Cardiac septum (tissue), 1 donor: ENCODE measurements at regions of chr1 and their contacts with region 1.

Region 1: GRCh38 chr1:107430540-107431228 is 289.8 kb downstream of the NTNG1 start:
- DNase-seq: no peak

Region 2: GRCh38 chr1:107091418-107091817 is 339.3 kb before region 1 on chr1:
- intact Hi-C with region 1: no loop called
- DNase-seq: no peak

Region 3: GRCh38 chr1:107153014-107153413 is 277.7 kb before region 1 on chr1:
- intact Hi-C with region 1: no loop called
- DNase-seq: no peak

Region 4: DNA sequence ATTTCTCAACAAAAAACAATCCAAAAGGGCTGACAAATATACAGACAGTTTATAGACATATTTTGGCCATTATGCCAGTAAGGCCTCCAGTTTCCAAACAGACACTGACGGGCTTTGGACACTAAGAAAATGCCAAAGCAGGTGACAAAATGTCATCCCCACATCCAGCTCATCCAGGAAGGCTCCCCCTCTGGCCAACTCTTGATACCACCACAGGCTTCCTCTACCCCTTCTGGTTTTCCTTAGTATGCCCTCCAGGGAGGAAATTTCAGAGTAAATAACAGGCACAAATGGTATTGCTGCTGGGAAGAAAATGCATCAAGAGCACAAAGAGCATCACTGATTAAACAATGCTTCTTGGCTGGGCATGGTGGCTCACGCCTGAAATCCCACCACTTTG is 309.0 kb after region 1 on chr1:
- intact Hi-C with region 1: loop called (anchors 5 kb)
- DNase-seq: no peak